ENCODE measurements at regions of chr1 and their contacts with region 1.

Region 1: DNA sequence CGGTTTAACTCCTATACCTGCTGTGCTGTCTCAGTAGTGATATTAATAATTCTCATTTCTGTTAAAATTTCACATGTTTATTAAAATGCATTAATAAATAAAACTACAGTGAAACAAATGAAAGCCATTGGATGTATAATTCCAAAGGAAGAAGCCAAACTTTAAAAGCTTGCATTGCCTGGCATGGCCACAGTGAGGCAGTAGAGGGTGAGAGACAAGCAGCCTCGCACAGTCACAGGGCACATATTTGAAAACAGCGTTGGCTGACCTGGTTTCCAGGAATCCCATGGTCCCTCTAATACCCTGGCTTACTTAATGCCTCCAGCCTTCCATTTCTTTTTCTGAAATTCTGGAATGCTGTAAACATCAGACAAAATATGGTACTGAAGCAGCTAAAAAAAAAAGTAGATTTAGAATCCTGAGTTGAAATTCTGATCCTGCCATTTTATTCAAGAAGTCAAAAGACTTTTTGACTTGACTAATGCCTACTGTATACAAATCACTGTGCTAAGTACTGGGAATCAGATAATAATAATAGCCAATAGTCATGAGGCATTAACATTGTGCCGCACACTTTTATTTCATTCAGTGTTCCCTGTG is 6.7 kb upstream of the RNASEL start:
- DNase-seq: peak; percentile 76
- H3K4me3 ChIP-seq: no peak overlapping the region
- H3K27ac ChIP-seq: no peak overlapping the region
- H3K4me1 ChIP-seq: peaks cover 5% of the 10 kb centered on the region
- H3K27me3 ChIP-seq: no peaks in the 10 kb centered on the region
- CTCF ChIP-seq: peak; percentile 94

Region 2: DNA sequence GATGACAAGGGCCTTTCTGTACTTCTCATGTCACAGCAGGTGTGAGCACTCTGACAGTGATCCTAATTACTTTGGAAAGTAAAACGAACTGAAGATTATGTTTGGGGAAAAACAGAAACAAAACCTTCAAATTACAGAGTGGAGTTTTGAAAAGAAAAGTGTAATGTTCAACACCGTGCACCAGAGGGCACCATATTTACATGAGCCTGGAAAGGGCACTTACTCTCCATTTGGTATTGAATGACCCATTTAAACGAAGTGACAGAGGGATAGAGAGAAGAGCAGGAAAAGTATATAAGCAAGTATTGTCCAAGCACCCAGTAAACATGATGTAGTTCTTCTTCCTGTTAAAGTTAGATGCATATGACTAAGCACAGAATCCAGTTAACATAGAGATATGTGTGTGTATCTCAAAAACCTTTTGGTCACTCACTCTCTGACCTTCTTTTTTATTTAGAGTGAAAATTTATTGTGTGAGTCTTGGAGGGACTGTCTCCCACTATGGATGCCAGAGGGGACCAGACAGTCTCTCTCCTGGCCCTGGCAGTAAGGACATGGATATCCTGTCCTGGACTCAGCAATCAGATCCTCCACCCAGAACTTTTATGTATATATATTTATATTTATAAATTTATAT is 149.6 kb before region 1 on chr1:
- CTCF ChIA-PET with region 1: interaction called, 4 read pairs
- POLR2A ChIA-PET with region 1: no interaction called
- intact Hi-C with region 1: loop called (anchors 5 kb)
- DNase-seq: peak; percentile 65
- H3K4me3 ChIP-seq: no peak overlapping the region
- H3K27ac ChIP-seq: no peak overlapping the region
- H3K4me1 ChIP-seq: no peaks in the 10 kb centered on the region
- H3K27me3 ChIP-seq: no peaks in the 10 kb centered on the region
- CTCF ChIP-seq: peak; percentile 79

Region 3: DNA sequence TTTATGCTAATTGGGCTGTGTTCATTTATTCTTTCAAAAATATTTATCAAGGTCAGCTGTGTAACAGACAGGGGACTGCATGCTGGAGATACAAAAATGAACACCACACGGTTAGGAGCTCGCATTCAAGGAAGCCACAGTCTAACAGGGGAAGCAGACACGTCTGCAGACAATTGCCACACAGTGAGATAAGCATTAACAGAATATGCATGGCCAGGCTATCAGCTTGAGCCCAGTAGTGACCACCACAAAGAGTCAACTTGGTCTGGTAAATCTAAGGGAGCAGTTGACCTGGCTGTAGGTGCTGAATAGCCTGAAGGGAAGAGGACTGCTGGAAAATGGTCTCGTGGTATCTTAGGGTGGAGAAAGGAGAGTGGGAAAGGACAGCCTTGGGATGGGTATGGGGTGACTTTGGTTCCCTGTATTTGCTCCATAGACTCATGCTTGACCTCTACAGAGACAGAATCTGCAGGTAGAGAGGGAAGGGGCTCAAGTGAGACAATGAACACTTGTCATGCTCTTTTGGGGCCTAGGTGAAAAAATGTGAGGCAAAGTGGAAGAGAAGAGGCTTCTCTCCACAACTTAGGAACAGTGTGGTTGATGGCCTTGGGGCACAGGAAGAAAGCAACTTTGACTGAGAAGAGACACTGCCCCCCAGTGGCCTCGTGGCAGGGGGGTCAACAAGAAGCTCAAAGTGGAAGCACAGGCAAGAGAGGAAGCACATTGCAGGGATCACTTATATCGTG is 186.3 kb after region 1 on chr1:
- CTCF ChIA-PET with region 1: interaction called, 69 read pairs
- POLR2A ChIA-PET with region 1: no interaction called
- intact Hi-C with region 1: no loop called
- DNase-seq: peak; percentile 80
- H3K4me3 ChIP-seq: no peak overlapping the region
- H3K27ac ChIP-seq: no peak overlapping the region
- H3K4me1 ChIP-seq: no peaks in the 10 kb centered on the region
- H3K27me3 ChIP-seq: no peaks in the 10 kb centered on the region
- CTCF ChIP-seq: peak; percentile 84

Region 4: DNA sequence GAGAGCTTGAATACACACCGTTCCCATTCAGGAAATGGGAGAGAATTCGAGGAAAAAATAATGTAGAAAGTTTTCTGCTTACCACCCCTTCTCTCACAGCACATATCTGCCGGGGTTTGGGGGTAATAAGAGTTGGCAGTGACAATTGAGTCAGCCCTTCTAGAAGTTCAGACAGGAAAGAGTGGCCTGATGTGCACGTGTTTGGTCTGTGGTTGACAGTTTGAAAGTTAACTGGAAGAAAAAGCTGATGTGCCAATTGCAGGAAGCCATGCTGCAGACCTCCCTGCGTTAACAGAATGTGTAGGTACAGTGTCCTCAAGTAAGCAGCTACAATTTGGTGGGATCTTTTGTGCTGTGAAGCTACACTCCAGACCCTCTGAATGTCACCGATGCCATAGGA is 294.3 kb after region 1 on chr1:
- CTCF ChIA-PET with region 1: no interaction called
- POLR2A ChIA-PET with region 1: no interaction called
- intact Hi-C with region 1: no loop called
- DNase-seq: no peak
- H3K4me3 ChIP-seq: no peak overlapping the region
- H3K27ac ChIP-seq: no peak overlapping the region
- H3K4me1 ChIP-seq: no peaks in the 10 kb centered on the region
- H3K27me3 ChIP-seq: no peaks in the 10 kb centered on the region
- CTCF ChIP-seq: no peak

Measured in A673 (cell line).